ENCODE measurements at regions of chr6 and their contacts with region 1.

Region 1: DNA sequence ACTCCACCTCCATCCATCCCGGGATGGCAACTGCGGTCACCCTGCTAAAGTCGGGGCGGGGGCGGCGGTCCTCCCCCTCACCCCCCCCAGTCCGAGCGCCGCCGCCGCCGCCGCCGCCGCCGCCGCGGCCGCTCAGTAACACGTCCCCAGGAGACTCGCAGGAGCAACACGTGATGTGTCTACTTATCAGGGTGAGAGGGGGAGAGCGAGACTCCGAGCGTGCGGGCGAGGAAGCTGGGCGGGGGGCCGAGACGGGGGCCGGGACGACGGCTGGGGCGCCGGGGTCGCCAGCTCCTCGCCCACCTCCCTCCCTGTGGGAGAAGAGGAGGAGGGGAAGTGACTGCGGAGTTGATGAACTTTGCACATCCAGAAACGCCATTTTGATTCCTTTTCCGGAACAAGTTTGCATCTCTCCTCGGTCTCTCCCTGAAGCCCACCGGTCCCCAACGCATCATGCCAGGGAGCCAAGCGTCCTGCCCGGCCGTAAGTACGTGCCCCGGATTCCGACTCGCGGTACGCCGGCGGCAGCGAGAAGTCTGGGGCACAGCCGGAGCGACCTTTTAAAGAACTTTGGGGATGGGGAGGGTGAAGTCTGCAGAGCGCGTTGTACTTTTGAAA is at the start of gene RREB1:
- DNase-seq: peak; percentile 68
- H3K4me3 ChIP-seq: peak within 1 kb of the TSS; percentile 87 to 99 (median 93)
- H3K27ac ChIP-seq: peak within 1 kb of the TSS; percentile 71
- H3K4me1 ChIP-seq: peaks cover 13% of the 10 kb centered on the region
- H3K27me3 ChIP-seq: no peaks in the 10 kb centered on the region
- CTCF ChIP-seq: no peak
- POLR2A ChIP-seq: no peak
- total RNA-seq, gene RREB1: 30.8 and 33.0 TPM in 2 replicates

Region 2: DNA sequence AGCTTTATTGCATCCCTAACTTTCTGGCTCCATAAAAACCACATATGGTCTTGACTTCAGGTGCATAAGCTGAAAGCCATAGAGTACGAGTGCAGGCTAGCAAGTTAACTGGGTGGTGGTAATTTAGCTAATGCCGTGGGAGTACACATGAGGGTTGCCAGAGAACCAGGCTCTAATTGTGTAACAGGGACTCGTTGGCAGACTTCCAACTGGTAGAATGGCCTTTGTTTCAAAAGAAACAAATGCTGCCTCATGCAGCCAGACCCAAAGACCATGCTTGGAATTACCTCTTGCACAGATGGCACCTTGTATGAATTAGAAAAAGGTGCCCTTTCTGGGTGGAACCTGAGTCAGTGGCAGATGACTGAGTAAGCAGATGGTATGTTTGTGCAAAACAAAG is 446.0 kb before region 1 on chr6:
- CTCF ChIA-PET with region 1: no interaction called
- POLR2A ChIA-PET with region 1: no interaction called
- dilution Hi-C with region 1: no loop called
- intact Hi-C with region 1: no loop called
- DNase-seq: peak; percentile 55
- H3K4me3 ChIP-seq: no peak overlapping the region
- H3K27ac ChIP-seq: no peak overlapping the region
- H3K4me1 ChIP-seq: no peaks in the 10 kb centered on the region
- H3K27me3 ChIP-seq: no peaks in the 10 kb centered on the region
- CTCF ChIP-seq: no peak
- POLR2A ChIP-seq: no peak

Region 3: GRCh38 chr6:6724539-6725467 is 382.9 kb before region 1 on chr6:
- CTCF ChIA-PET with region 1: no interaction called
- POLR2A ChIA-PET with region 1: no interaction called
- dilution Hi-C with region 1: no loop called
- intact Hi-C with region 1: loop called (anchors 1 kb)
- DNase-seq: peak; percentile 83
- H3K4me3 ChIP-seq: peak overlapping the region in 1 of 3 experiments; percentile 16
- H3K27ac ChIP-seq: peak overlapping the region; percentile 59
- H3K4me1 ChIP-seq: peaks cover 19% of the 10 kb centered on the region
- H3K27me3 ChIP-seq: peaks cover 0 to 2% of the 10 kb centered on the region in 2 experiments
- CTCF ChIP-seq: peak; percentile 57 to 60
- POLR2A ChIP-seq: no peak

Region 4: GRCh38 chr6:7042056-7042653 is 65.5 kb before region 1 on chr6:
- CTCF ChIA-PET with region 1: no interaction called
- POLR2A ChIA-PET with region 1: no interaction called
- dilution Hi-C with region 1: no loop called
- intact Hi-C with region 1: loop called (anchors 2 kb)
- DNase-seq: peak; percentile 78
- H3K4me3 ChIP-seq: peak overlapping the region in 1 of 3 experiments; percentile 19
- H3K27ac ChIP-seq: peak overlapping the region; percentile 81
- H3K4me1 ChIP-seq: peaks cover 22% of the 10 kb centered on the region
- H3K27me3 ChIP-seq: no peaks in the 10 kb centered on the region
- CTCF ChIP-seq: no peak
- POLR2A ChIP-seq: peak; percentile 39

Region 5: DNA sequence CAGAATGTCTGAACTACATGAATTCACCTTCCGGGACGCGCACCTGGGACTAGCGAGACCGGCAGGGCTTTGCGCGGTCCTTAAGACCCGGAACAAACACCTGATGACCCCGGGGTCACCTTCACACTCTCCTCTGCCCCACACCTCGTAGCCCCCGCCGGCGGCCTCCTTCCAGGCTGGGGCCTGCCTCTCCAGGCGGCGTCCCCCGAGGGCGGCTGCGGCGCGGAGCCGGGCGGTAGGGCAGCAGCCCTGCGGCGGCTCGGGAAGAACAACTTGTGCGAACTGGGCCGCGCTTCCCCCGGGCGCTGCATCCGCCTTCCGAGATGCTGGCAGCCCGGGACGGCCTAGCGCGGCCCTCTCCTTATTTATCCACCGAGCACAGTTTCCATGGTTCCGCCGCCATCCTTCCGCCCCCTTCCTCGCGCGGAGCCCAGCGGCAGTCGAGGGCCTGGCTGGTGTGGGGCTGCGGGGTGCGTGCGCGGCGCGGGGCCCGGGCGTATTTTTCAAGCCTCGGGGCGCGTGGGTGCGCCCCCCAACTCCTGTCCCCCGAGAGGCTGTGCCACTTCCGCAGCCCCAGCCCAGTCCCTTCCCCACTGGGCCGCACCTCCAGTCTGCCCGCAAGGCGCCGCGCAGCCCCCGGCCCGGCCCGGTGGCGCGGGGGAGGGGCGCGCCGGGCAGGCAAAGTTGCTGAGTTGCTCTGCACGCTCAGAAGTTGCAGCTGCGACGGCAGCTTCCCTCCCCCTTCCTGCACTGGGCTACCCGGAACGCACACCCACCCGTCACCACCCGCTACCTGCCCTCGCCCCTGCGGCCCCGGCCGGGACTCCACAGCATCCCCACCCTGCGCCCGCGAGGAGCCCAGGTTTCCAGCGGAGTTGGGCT is 56.2 kb before region 1 on chr6:
- CTCF ChIA-PET with region 1: no interaction called
- POLR2A ChIA-PET with region 1: no interaction called
- dilution Hi-C with region 1: no loop called
- intact Hi-C with region 1: loop called (anchors 2 kb)
- DNase-seq: peak; percentile 34
- H3K4me3 ChIP-seq: peak overlapping the region; percentile 48 to 63 (median 62)
- H3K27ac ChIP-seq: no peak overlapping the region
- H3K4me1 ChIP-seq: peaks cover 9% of the 10 kb centered on the region
- H3K27me3 ChIP-seq: no peaks in the 10 kb centered on the region
- CTCF ChIP-seq: no peak
- POLR2A ChIP-seq: no peak

Region 6: DNA sequence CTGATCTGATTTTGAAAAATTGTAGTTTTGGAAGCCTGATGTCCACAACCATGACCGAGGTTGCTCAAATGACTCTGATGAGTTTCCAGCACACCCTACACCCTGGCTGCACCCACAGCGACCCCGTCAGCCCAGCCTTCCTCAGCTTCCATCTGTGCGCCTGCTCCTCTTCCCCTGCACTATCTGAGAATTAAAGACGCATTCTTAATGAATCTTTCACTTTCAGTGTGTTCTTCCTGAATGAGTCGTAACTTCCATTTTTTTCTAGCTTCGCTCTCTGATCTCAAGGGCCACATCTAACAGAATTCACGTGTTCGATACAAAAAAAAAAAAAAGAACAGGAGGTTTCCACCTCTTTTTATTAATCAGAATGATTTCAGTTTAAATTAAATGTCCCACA is 21.2 kb before region 1 on chr6:
- CTCF ChIA-PET with region 1: interaction called, 9 read pairs
- POLR2A ChIA-PET with region 1: no interaction called
- dilution Hi-C with region 1: no loop called
- intact Hi-C with region 1: loop called (anchors 1 kb)
- DNase-seq: peak; percentile 57
- H3K4me3 ChIP-seq: peak overlapping the region; percentile 27 to 90 (median 85)
- H3K27ac ChIP-seq: no peak overlapping the region
- H3K4me1 ChIP-seq: peaks cover 8% of the 10 kb centered on the region
- H3K27me3 ChIP-seq: no peaks in the 10 kb centered on the region
- CTCF ChIP-seq: no peak
- POLR2A ChIP-seq: no peak

Region 7: GRCh38 chr6:7140631-7141378 is 33.1 kb after region 1 on chr6:
- CTCF ChIA-PET with region 1: no interaction called
- POLR2A ChIA-PET with region 1: interaction called, 4 read pairs
- dilution Hi-C with region 1: no loop called
- intact Hi-C with region 1: loop called (anchors 2 kb)
- DNase-seq: peak; percentile 73
- H3K4me3 ChIP-seq: peak overlapping the region; percentile 59 to 60 (median 60)
- H3K27ac ChIP-seq: peak overlapping the region; percentile 71
- H3K4me1 ChIP-seq: peaks cover 28% of the 10 kb centered on the region
- H3K27me3 ChIP-seq: no peaks in the 10 kb centered on the region
- CTCF ChIP-seq: no peak
- POLR2A ChIP-seq: peak; percentile 51